Prostate gland (tissue), 2 donors: ENCODE measurements at regions of chr18 and their contacts with region 1.

Region 1: DNA sequence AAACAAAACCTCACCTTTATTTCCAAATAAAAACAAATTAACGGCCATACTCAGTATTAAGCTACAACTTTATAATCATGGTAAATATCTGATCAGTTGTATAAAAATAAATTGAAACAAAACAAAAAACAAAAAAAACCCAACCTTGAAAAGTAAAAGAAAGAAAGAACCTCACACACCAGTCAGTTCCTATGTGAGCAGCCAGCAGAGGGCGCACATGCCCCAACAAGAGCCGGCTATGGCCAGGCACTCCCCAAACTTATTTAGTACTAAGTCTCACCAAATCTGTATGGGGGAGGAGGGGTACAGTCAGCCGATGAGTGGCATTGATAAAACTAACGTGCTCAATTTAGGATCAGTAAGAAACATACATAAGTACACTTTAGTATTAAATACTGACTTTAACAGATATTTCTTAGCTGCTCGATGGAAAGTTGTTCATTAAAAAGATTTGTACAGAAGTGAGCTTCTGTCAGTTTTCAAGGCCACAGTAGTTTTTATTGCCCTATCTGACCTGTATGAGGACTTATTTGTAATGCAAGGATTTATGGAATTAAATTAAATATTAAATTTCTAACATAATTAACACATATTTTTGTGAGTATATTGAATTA is 172.6 kb downstream of the TCF4 start:
- DNase-seq: peak; percentile 82
- H3K4me3 ChIP-seq: no peak overlapping the region
- H3K27ac ChIP-seq: no peak overlapping the region
- H3K4me1 ChIP-seq: no peaks in the 10 kb centered on the region
- H3K27me3 ChIP-seq: no peaks in the 10 kb centered on the region
- CTCF ChIP-seq: peak; percentile 73 to 88 (median 80)
- POLR2A ChIP-seq: no peak

Region 2: DNA sequence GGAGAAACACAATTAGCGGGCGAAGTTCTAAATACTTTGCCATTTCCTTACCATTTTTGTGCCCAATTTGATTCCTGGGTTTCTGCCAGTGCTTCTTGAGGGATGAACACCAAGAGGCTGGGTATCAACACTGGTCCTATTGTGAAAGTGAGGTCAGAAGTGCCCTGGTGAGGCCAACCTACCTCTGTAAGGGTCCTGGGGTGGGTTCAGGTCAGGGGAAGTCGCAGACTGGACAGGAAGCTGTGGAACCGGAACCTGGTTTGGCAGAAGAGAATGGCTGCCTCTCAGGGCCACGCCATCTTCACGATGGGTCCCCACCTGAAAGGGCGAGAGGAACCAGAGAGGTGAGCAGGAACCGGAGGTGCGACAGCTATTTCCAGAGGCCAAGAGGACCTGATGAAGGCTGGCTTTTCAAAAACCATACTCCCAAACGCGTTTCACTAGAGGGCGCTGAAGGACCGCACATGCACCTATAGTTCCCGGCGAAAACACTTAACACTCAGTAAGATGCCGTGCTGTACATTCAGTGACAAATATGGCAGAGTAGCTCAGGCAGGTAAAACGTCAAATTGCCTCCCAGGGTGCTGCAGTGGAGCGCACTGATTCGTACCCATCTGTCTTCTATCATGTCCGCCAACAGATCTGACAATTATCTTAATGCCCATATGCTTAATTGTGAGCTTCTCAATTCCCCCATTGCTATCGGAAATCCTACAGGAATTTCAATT is 180.8 kb before region 1 on chr18:
- intact Hi-C with region 1: loop called (anchors 10 kb)
- DNase-seq: peak; percentile 80
- H3K4me3 ChIP-seq: no peak overlapping the region
- H3K27ac ChIP-seq: no peak overlapping the region
- H3K4me1 ChIP-seq: no peaks in the 10 kb centered on the region
- H3K27me3 ChIP-seq: no peaks in the 10 kb centered on the region
- CTCF ChIP-seq: peak; percentile 23 to 77 (median 70)
- POLR2A ChIP-seq: no peak

Region 3: GRCh38 chr18:55343396-55344073 is 71.8 kb before region 1 on chr18:
- intact Hi-C with region 1: loop called (anchors 5 kb)
- DNase-seq: no peak
- H3K4me3 ChIP-seq: no peak overlapping the region
- H3K27ac ChIP-seq: no peak overlapping the region
- H3K4me1 ChIP-seq: no peaks in the 10 kb centered on the region
- H3K27me3 ChIP-seq: no peaks in the 10 kb centered on the region
- CTCF ChIP-seq: peak in 3 of 4 experiments; percentile 27 to 57 (median 50)
- POLR2A ChIP-seq: no peak

Region 4: GRCh38 chr18:55356815-55357214 is 58.5 kb before region 1 on chr18:
- intact Hi-C with region 1: no loop called
- DNase-seq: no peak
- H3K4me3 ChIP-seq: no peak overlapping the region
- H3K27ac ChIP-seq: no peak overlapping the region
- H3K4me1 ChIP-seq: no peaks in the 10 kb centered on the region
- H3K27me3 ChIP-seq: no peaks in the 10 kb centered on the region
- CTCF ChIP-seq: no peak
- POLR2A ChIP-seq: no peak

Region 5: DNA sequence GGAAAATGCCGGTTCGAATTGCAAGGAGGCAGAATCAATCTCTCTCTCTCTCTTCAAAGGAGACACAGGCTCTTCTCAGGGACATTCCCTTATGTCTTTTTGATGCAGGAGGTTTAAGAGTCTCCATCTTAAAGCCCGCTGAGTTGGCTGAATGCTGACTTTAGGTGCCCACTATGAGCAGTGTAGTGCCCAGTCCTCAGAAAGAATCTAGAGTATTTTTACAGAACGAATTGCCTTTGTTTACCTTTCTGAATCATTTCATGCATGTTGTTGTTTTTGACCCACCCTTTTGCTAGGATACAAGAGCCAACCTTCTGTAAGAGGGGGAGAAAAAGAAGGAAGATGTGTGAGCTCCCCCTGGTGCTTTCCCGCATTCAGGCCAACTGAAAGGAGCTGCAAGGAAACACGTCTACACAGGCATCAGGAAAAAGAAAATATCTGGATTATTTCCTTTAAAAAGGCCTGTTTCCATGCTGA is 366.2 kb after region 1 on chr18:
- intact Hi-C with region 1: loop called (anchors 10 kb)
- DNase-seq: peak; percentile 12
- H3K4me3 ChIP-seq: no peak overlapping the region
- H3K27ac ChIP-seq: no peak overlapping the region
- H3K4me1 ChIP-seq: no peaks in the 10 kb centered on the region
- H3K27me3 ChIP-seq: no peaks in the 10 kb centered on the region
- CTCF ChIP-seq: peak in 3 of 4 experiments; percentile 36 to 56 (median 42)
- POLR2A ChIP-seq: no peak

Region 6: DNA sequence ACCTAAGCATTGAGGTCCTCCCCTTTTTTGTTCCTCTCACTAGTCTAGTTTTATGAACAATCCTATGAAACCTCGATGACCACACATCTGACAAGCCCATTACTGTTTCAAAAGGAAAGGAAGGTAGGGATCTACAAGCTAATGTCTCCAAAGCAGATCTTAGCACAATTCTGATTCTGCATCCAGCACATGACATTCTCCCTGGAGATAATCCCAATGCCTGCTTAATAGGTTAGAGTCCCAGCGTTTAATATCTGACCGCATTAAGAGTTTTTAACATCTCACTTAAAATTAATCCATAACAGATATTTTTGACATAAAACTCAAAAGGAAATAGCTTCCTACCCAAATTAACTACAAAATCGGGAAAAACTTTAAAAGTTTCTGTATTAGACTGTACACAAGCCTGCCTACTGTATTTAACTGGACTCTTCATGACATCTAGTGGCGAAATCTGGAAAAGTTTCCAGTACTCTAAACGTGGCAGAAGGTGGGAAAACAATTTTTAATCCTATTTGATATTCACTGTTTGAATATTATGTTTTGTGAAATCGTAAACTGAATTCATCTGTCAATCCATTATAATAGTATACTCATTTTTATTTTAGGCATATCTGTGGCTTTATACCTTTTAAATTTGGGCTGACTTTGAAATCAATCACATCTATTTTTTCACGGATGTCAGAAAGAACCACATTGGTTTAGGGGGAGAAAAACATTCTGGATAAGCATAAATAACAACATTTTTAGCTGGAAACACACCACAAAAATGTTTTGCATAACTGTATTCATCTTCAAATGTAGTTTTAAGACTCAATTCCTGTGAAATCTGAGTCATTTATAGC is 1160.7 kb after region 1 on chr18:
- intact Hi-C with region 1: loop called (anchors 5 kb)
- DNase-seq: no peak
- H3K4me3 ChIP-seq: no peak overlapping the region
- H3K27ac ChIP-seq: no peak overlapping the region
- H3K4me1 ChIP-seq: no peaks in the 10 kb centered on the region
- H3K27me3 ChIP-seq: no peaks in the 10 kb centered on the region
- CTCF ChIP-seq: peak; percentile 26 to 82 (median 72)
- POLR2A ChIP-seq: no peak